ENCODE measurements at regions of chr11 and their contacts with region 1.

Region 1: GRCh38 chr11:62855571-62856332 is 16.4 kb upstream of the WDR74 start:
- DNase-seq: peak; percentile 99
- ATAC-seq: peak; percentile 89
- H3K4me3 Mint-ChIP-seq: peak overlapping the region; percentile 96
- H3K27ac Mint-ChIP-seq: peak overlapping the region; percentile 98
- H3K4me1 Mint-ChIP-seq: peaks cover 45% of the 10 kb centered on the region
- H3K27me3 Mint-ChIP-seq: no peaks in the 10 kb centered on the region

Region 2: GRCh38 chr11:62753736-62754603 is 101.8 kb before region 1 on chr11 and contains the start of gene ZBTB3:
- POLR2A ChIA-PET with region 1: interaction called, 17 read pairs
- DNase-seq: peak; percentile 95
- ATAC-seq: peak; percentile 99
- H3K4me3 Mint-ChIP-seq: peak within 1 kb of the TSS; percentile 96
- H3K27ac Mint-ChIP-seq: peak within 1 kb of the TSS; percentile 98
- H3K4me1 Mint-ChIP-seq: peaks cover 26% of the 10 kb centered on the region
- H3K27me3 Mint-ChIP-seq: peaks cover 4% of the 10 kb centered on the region
- total RNA-seq, gene ZBTB3: 14.0 to 17.1 TPM

Region 3: DNA sequence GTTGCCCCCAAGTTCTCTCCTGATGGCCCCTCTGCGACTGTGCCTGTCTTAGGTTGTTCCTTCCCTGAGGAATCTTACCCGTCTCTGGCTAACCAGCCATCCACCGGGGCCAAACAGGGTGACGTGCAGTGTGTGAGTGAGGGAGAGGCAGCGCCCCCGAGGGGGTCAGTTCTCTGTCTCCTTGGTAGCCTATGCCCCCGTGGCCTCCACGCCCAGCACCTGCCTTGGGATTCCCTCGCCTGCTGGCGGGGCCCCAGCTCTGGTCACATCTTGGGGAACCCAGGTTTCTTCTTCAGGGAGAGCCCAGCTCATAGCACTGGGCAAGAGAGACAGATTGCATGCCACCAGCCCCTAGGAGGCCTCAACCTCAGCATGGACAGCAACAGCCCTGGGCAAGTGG is 56.3 kb before region 1 on chr11:
- POLR2A ChIA-PET with region 1: interaction called, 18 read pairs
- DNase-seq: no peak
- ATAC-seq: no peak
- H3K4me3 Mint-ChIP-seq: no peak overlapping the region
- H3K27ac Mint-ChIP-seq: peak overlapping the region; percentile 42
- H3K4me1 Mint-ChIP-seq: peaks cover 25% of the 10 kb centered on the region
- H3K27me3 Mint-ChIP-seq: no peaks in the 10 kb centered on the region

Region 4: DNA sequence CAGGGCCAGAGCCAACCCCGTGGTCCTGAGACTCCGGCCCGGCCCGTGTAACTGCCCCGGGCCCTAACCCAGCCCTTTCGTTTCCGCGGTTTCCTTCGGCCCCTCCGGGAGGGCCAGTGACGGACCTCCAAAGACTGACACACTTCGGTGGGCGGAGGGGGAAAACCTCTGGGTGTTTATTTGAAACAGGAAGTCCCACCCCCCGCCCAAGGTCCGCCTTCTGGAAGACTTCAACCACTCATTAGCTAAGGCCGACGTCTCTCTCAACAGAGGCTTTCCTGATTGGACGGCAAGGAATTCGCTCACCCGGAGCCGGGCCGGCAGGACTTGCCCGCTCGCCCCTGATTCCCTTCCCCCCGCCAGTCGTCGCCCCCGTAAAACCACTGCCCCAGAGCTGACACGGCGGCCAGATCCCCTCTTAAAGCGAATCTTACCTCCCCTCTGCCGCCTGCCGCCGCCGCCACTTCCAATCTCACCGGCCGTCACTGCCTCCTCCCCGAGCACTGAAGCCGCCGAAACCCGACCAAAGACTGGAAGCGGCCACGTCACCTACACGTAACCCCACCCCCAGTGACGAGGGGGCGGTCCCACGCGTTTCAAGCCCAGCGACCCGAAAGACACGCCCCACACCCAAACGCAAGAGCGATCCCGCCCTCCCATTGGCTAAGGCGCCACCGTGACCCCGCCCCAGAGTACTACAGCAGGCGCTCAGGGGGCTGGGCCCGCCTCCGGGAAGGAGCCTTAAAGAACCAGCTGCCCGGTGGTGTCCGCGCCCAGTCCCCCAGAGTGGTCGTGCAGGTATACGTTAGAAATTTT is 24.0 kb before region 1 on chr11 and contains the start of gene STX5:
- POLR2A ChIA-PET with region 1: interaction called, 34 read pairs
- DNase-seq: peak; percentile 99
- ATAC-seq: peak; percentile 91
- H3K4me3 Mint-ChIP-seq: peak within 1 kb of the TSS; percentile 99
- H3K27ac Mint-ChIP-seq: peak within 1 kb of the TSS; percentile 100
- H3K4me1 Mint-ChIP-seq: peaks cover 26% of the 10 kb centered on the region
- H3K27me3 Mint-ChIP-seq: no peaks in the 10 kb centered on the region
- total RNA-seq, gene STX5: 43.4 to 44.3 TPM

Region 5: GRCh38 chr11:62896049-62896448 is 40.3 kb after region 1 on chr11:
- POLR2A ChIA-PET with region 1: no interaction called
- DNase-seq: no peak
- ATAC-seq: no peak
- H3K4me3 Mint-ChIP-seq: no peak overlapping the region
- H3K27ac Mint-ChIP-seq: no peak overlapping the region
- H3K4me1 Mint-ChIP-seq: peaks cover 5% of the 10 kb centered on the region
- H3K27me3 Mint-ChIP-seq: peaks cover 12% of the 10 kb centered on the region